Adrenal gland (tissue), 19 donors: ENCODE measurements at regions of chr2 and their contacts with region 1.

Region 1: GRCh38 chr2:175684457-175684856 is 317.6 kb downstream of the LNPK start:
- DNase-seq: no peak
- H3K4me3 ChIP-seq: no peak overlapping the region
- H3K27ac ChIP-seq: no peak overlapping the region
- H3K4me1 ChIP-seq: no peaks in the 10 kb centered on the region
- H3K27me3 ChIP-seq: peaks cover 23% of the 10 kb centered on the region
- CTCF ChIP-seq: no peak
- POLR2A ChIP-seq: no peak

Region 2: GRCh38 chr2:175366815-175367214 is 317.6 kb before region 1 on chr2:
- intact Hi-C with region 1: loop called in 1 of 2 experiments (anchors 10 kb)
- DNase-seq: peak in 6 of 7 donors; percentile 18 to 58 (median 36)
- H3K4me3 ChIP-seq: no peak overlapping the region
- H3K27ac ChIP-seq: no peak overlapping the region
- H3K4me1 ChIP-seq: peaks cover 0 to 5% of the 10 kb centered on the region in 2 donors
- H3K27me3 ChIP-seq: peaks cover 7% of the 10 kb centered on the region
- CTCF ChIP-seq: peak; percentile 62 to 81 (median 80)
- POLR2A ChIP-seq: no peak

Region 3: DNA sequence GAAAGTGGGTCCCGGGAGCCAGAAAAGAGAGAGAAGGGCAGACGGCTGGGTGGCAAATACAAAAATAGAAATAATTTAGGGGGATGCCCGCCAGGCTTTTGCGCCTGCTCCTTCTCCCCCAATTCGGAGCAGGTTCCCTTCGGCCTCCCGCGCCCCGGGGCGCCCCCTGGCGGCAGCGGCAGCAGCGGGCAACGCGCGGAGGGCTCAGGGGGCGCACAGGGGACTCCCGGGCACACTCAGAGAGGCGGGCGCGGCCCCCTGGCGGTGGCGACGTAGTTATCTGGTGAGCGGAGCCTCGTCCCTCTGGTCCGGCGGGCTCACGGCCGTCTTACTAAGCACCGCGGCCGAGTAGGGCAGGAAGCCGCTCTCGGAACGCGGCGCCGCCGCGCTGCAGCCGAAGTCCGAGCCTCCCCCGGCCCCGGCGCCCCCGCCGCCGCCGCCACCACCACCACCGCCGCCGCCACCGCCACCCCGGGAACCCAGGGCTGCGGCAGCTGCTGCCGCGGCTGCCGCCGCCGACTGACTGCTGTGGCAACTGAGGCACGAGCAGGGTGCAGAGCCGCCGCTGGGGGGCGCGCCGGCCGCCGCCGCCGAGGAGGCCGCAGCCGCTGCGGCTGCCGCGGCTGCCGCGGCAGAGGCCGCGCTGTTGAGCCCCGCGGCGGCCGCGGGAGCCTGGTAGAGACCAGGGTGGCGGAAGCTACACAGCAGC is 395.5 kb after region 1 on chr2:
- intact Hi-C with region 1: loop called (anchors 5 to 10 kb)
- DNase-seq: peak in 2 of 7 donors; percentile 14 to 49
- H3K4me3 ChIP-seq: peak overlapping the region in 1 of 4 donors; percentile 27
- H3K27ac ChIP-seq: no peak overlapping the region
- H3K4me1 ChIP-seq: peaks cover 0 to 4% of the 10 kb centered on the region in 2 donors
- H3K27me3 ChIP-seq: peaks cover 98% of the 10 kb centered on the region
- CTCF ChIP-seq: peak in 4 of 6 experiments; percentile 9 to 53 (median 46)
- POLR2A ChIP-seq: no peak

Region 4: GRCh38 chr2:176088048-176088936 is 403.8 kb after region 1 on chr2:
- intact Hi-C with region 1: loop called (anchors 5 to 10 kb)
- DNase-seq: peak; percentile 33 to 68 (median 55)
- H3K4me3 ChIP-seq: peak overlapping the region in 1 of 4 donors; percentile 7
- H3K27ac ChIP-seq: no peak overlapping the region
- H3K4me1 ChIP-seq: peaks cover 4 to 17% of the 10 kb centered on the region in 2 donors
- H3K27me3 ChIP-seq: peaks cover 96% of the 10 kb centered on the region
- CTCF ChIP-seq: peak; percentile 40 to 71 (median 62)
- POLR2A ChIP-seq: no peak